Motor neuron (in vitro differentiated cells): ENCODE measurements at regions of chr1 and their contacts with region 1.

Region 1: DNA sequence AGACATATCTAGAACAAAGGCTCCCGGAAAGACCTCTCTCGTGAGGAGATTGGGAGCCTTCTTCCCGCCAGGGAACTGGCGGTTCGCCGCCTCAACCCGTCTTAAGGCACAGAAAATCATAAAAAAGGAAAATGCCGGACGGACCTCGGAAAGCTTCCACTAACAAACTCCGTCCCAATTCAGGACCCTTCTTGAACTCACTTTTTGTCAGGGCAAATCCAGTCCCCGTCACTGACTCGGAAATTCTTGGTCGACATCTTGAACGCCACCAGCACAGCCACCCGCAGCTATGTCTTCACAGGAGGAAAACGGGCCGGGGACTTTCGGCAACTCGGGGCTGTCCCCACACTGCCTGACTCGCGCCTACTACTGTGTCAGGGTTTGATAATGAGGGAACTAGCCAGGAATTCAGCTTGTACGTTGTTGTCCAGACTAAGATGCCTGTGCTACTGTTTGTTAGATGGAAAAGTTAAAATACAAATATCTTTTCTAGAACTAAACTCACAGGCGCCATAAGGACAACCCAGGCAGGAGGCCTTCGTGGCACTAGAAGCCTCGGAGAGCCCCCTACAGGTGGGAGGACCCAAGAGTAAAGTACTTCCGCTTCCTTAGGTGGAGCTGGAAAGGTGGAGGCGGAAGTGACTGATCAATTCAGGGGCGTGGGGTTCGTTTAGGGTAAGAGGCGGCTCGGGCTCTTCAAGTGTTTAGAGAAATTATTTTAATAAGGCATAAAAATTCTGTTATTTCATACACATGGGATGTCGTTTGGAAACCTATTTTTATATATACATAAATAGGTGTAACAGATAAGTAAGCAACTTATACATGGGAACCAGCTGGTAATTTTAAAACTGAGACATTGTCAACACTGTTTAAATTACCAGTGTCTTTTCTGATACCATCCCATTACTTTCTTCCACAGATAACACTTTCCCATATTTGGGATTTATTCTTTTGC is at the start of gene ZRANB2:
- ATAC-seq: peak; percentile 94 to 97 (median 96)
- H3K4me3 ChIP-seq: peak within 1 kb of the TSS; percentile 73 to 90 (median 76)
- H3K27ac ChIP-seq: peak within 1 kb of the TSS; percentile 90 to 98
- H3K4me1 ChIP-seq: peaks cover 17 to 20% of the 10 kb centered on the region in 2 donors
- total RNA-seq, gene ZRANB2: 84.9 to 155 (median 111) TPM

Region 2: GRCh38 chr1:70896224-70896623 is 184.8 kb before region 1 on chr1:
- in situ Hi-C with region 1: no loop called
- ATAC-seq: peak in 3 of 8 experiments; percentile 19 to 36 (median 19)
- H3K4me3 ChIP-seq: no peak overlapping the region
- H3K27ac ChIP-seq: no peak overlapping the region
- H3K4me1 ChIP-seq: peaks cover 2 to 8% of the 10 kb centered on the region in 2 donors

Region 3: GRCh38 chr1:71533950-71534349 is 452.9 kb after region 1 on chr1:
- in situ Hi-C with region 1: loop called in 1 of 9 experiments (anchors 25 kb)
- ATAC-seq: peak in 4 of 8 experiments; percentile 29 to 69 (median 46)
- H3K4me3 ChIP-seq: no peak overlapping the region
- H3K27ac ChIP-seq: no peak overlapping the region
- H3K4me1 ChIP-seq: peaks cover 0 to 8% of the 10 kb centered on the region in 2 donors